ENCODE measurements at regions of chr7 and their contacts with region 1.

Region 1: DNA sequence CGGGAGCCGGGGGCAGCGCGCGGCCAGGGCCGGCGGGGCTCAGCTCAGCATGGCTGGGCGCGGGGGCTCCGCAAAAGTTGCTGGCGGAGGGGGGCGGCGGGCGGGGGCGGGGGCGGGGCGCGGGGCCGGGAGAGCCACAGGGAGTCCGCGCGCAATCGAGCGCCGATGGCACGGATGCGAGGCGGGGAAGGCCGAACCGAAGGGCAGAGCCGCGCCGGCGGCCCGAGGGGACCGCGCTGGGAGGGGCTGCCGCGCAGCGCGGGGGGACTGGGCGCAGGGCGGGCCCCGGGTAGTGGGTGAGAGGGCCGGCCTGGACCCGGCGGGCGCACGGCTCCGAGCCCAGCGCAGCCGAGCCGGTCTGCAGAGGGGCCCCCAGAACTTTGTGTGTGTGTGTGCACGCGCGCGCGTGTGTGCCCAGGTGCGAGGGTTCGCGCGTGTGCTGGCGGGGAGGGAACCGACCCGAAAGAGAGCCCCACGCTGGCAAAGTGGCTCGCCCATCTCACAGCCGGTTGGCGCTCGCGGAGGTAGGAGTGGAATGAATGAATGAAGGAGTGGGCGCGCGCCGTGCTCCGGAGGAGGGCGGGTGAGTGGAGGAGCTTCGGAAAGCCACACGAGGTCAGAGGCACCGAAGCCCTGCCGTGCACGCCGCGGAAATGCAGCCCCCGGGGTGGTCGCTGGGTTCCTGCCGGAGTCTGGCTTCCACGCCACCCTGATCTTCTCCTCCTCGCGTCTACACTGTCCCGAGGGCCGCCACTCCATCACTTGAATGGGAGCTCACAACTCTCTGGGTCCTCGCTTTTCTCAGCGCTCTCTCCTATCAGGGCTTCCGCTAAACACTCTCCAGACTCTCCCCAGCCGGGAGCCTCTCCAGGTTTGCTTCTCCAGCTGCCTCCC is at the start of gene HIPK2:
- DNase-seq: peak; percentile 65
- H3K4me3 Mint-ChIP-seq: peak within 1 kb of the TSS; percentile 99
- H3K27ac Mint-ChIP-seq: peak within 1 kb of the TSS; percentile 98
- H3K4me1 Mint-ChIP-seq: peaks cover 48% of the 10 kb centered on the region
- H3K27me3 Mint-ChIP-seq: peaks cover 15% of the 10 kb centered on the region
- total RNA-seq, gene HIPK2: 28.3 and 29.2 TPM in 2 replicates

Region 2: DNA sequence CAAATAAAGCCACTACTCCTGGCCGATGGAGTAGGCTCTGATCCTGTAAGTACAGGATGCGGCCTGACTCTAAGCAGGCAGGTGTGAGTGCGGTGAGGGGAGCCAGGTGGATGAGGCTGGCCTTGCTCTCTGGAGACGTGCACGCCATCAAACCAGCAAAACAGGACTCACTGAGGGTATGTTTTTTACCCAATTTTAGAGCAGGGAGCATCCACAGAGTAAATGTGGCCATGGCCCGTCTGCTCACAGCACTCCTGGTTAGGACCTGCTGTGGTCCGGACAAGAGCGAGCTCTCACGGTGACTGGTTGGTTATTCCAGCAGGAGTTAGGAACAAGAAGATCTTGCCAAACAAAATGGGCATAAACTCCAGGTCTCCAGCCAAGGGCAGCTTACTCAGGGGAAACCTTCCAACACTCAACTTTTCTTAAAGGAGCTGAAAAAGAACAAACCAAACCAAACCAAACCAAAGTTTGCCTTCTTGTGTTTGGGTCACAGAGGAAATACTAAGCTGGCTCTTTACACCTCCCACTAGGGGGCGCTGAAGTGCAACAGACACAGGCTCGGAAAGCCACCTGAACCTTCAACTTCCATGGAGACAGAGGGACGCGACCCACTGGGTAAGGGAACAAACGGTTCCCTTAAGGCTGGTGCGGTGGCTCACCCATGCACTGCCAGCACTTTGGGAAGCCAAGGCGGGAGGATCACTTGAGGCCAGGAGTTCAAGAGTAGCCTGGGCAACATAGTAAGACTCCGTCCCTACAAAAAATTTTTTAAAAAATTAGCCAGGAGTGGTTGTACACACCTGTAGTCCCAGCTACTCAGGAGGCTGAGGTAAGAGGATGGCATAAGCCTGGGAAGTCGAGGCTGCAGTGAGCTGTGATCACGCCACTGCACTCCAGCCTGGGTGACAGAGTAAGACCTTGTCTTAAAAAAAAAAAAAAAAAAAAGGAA is 132.3 kb before region 1 on chr7:
- intact Hi-C with region 1: loop called (anchors 1 kb)
- DNase-seq: peak; percentile 68
- H3K4me3 Mint-ChIP-seq: no peak overlapping the region
- H3K27ac Mint-ChIP-seq: no peak overlapping the region
- H3K4me1 Mint-ChIP-seq: peaks cover 65% of the 10 kb centered on the region
- H3K27me3 Mint-ChIP-seq: peaks cover 1% of the 10 kb centered on the region

Region 3: GRCh38 chr7:139680676-139681462 is 97.3 kb before region 1 on chr7:
- intact Hi-C with region 1: loop called (anchors 1 kb)
- DNase-seq: peak; percentile 65
- H3K4me3 Mint-ChIP-seq: peak overlapping the region; percentile 74
- H3K27ac Mint-ChIP-seq: peak overlapping the region; percentile 85
- H3K4me1 Mint-ChIP-seq: peaks cover 61% of the 10 kb centered on the region
- H3K27me3 Mint-ChIP-seq: no peaks in the 10 kb centered on the region

Region 4: GRCh38 chr7:139829025-139829774 is 51.0 kb after region 1 on chr7 and contains the start of gene TBXAS1:
- intact Hi-C with region 1: loop called (anchors 2 kb)
- DNase-seq: no peak
- H3K4me3 Mint-ChIP-seq: peak within 1 kb of the TSS; percentile 63
- H3K27ac Mint-ChIP-seq: peak within 1 kb of the TSS; percentile 86
- H3K4me1 Mint-ChIP-seq: peaks cover 37% of the 10 kb centered on the region
- H3K27me3 Mint-ChIP-seq: peaks cover 16% of the 10 kb centered on the region
- total RNA-seq, gene TBXAS1: 2.4 and 3.1 TPM in 2 replicates

Region 5: DNA sequence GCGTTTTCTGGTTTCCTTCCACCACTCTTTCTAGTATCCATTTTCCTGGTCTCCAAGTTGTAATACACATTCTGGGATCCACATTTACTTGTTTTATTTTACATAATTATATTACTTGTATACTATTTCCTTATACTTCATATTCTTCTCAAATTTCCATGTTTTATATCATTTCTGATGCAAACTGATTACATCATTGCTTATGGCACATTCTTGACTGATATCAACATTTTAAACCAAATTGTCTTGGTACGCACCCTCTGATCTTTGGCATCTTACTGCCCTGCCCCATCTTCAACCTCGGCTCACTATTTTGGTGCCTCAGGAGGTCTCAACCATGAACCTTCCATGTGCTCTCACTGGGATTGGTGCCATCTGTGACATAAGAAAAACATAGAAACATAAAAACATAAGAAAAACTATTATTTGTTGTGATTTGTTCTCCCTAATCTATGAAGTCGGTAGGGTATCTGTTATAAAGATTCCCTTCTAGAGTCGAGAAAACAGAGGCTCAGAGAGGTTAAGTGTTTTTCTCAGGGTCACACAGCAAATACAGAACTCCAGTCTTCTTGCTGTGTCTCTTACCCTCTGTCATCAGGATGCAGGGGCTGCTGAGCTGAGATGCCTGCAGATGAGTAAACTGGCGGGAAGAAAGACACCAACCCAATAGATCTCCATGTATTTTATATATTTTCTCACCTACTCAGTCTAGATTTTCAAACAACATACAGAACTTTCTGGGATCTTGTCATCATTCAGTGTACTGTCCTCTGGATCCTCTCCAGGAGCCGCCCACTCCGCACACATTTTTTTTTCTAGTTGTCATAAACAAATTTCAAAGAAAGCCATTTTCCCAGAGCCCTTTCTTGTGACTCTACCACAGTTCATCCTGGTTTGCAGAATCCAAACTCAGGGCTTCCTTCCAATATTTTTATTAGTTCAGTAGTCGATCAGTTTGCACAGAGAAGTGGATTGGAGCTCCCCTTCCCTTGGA is 205.0 kb after region 1 on chr7:
- intact Hi-C with region 1: loop called (anchors 5 kb)
- DNase-seq: no peak
- H3K4me3 Mint-ChIP-seq: no peak overlapping the region
- H3K27ac Mint-ChIP-seq: no peak overlapping the region
- H3K4me1 Mint-ChIP-seq: peaks cover 18% of the 10 kb centered on the region
- H3K27me3 Mint-ChIP-seq: peaks cover 16% of the 10 kb centered on the region

Region 6: GRCh38 chr7:140062528-140063299 is 284.5 kb after region 1 on chr7 and contains the start of gene PARP12:
- intact Hi-C with region 1: loop called (anchors 10 kb)
- DNase-seq: peak; percentile 88
- H3K4me3 Mint-ChIP-seq: peak within 1 kb of the TSS; percentile 82
- H3K27ac Mint-ChIP-seq: peak within 1 kb of the TSS; percentile 91
- H3K4me1 Mint-ChIP-seq: peaks cover 43% of the 10 kb centered on the region
- H3K27me3 Mint-ChIP-seq: peaks cover 5% of the 10 kb centered on the region
- total RNA-seq, gene PARP12: 62.0 and 63.7 TPM in 2 replicates

Region 7: DNA sequence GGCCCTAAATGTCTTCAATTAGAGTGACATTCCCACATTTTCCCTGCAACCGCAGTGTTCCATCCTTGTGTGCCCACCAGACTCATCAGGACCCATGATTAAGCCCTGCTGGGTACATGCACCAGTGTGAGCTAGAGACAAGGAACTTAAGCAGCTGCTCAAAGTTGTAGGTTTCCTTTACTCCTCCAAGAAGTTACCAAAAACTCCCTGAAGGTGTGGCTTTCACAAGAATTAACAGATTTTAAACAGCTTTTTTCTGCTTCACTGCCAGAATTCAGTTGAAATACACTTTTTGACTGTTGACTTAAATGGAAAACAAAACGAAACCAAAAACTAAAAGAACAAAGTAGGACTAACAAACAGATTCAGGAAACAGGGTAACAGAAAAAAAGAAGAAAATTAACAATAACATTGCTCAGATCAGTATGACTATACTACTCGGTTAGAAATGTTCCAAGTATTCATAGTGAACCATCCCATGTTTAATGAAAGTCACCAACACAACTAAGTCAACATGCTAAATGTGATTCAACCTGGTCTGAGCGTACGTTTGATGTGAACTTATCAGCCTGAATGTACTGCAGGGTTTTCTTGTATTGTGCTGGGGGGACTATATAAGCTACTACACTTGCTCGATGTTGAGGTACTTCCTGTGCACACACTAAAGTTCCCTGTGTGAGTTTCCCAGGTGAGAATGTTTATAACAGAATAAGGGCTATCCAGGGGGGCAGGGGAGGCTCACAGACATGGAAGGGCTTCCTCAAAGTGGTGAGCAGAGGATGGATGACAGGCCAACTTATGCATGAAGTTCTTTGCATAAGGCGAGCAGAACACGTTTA is 597.9 kb after region 1 on chr7:
- intact Hi-C with region 1: loop called (anchors 10 kb)
- DNase-seq: peak; percentile 47
- H3K4me3 Mint-ChIP-seq: peak overlapping the region; percentile 61
- H3K27ac Mint-ChIP-seq: peak overlapping the region; percentile 98
- H3K4me1 Mint-ChIP-seq: peaks cover 48% of the 10 kb centered on the region
- H3K27me3 Mint-ChIP-seq: no peaks in the 10 kb centered on the region

Measured in activated T-helper 1 cell treated with anti-CD3 and anti-CD28 coated beads, Interleukin-12 subunit alpha, Interleukin-12 subunit beta, Interleukin-2, Interleukin-4 antibody, amounts not matched to agents 30 ng/mL and 10 ng/mL and 1 ng/mL, durations not matched to agents 14 hours and 24 hours and 36 hours (primary cell).